ENCODE measurements at regions of chr14 and their contacts with region 1.

Region 1: DNA sequence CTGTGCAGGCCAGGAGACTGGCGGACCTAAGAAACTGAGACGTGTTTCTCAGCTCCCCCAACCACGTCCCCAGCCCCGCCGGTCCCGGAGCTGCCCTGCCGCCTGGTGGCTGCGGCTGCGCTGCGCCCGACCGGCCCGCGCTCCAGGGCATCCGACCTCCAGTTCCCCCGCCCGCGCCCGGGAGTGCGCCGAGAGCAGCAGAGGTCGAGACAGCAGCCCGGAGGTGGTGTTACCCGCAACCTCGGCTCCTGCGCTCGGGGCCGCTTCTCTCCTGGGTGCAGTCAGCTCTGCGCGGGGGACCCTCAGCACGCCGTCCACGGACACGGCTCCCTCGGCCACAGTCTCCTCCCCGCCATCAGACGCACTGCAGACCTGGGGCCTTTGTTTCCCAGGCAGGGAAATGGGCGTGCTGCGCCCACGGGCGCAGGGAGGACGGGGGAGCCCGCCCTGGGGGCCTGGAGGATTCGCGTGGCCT is 21.6 kb upstream of the GPR132 start:
- DNase-seq: peak; percentile 94
- ATAC-seq: peak; percentile 87
- H3K4me3 Mint-ChIP-seq: peak overlapping the region; percentile 64
- H3K27ac Mint-ChIP-seq: no peak overlapping the region
- H3K4me1 Mint-ChIP-seq: peaks cover 8% of the 10 kb centered on the region
- H3K27me3 Mint-ChIP-seq: no peaks in the 10 kb centered on the region

Region 2: DNA sequence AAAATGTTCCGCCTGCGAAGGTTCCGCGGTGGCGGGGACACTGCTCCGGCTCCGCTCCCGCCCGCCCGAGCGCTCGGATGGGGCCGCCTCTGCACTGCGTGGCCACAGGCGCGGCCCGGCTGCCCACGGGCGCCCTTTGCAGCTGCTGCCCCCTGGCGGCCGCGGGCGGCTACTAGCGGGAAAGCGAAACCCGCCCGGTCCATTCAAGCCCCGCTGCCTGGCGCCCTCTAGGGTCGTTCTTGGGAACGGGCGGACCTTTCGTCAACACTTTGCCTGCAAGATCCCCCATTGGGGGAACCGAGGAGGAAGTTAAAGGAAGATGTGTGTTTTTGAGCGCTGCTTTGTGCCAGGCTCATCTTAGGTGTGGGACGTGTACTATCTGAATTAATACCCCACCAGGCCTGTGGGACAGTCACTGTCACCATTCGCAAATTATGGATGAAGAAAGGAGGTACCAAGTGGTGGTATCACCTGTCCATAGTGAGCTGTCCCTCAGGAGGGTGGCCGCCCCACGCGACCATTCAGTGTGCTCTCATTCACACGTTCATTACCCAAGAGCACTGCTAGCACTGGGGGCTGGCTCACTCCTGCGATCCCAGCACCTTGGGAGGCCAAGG is 41.1 kb before region 1 on chr14:
- CTCF ChIA-PET with region 1: interaction called, 6 read pairs
- POLR2A ChIA-PET with region 1: no interaction called
- intact Hi-C with region 1: loop called in 1 of 2 experiments (anchors 1 kb)
- DNase-seq: peak; percentile 96
- ATAC-seq: peak; percentile 89
- H3K4me3 Mint-ChIP-seq: no peak overlapping the region
- H3K27ac Mint-ChIP-seq: peak overlapping the region; percentile 25
- H3K4me1 Mint-ChIP-seq: peaks cover 14% of the 10 kb centered on the region
- H3K27me3 Mint-ChIP-seq: peaks cover 9% of the 10 kb centered on the region

Region 3: DNA sequence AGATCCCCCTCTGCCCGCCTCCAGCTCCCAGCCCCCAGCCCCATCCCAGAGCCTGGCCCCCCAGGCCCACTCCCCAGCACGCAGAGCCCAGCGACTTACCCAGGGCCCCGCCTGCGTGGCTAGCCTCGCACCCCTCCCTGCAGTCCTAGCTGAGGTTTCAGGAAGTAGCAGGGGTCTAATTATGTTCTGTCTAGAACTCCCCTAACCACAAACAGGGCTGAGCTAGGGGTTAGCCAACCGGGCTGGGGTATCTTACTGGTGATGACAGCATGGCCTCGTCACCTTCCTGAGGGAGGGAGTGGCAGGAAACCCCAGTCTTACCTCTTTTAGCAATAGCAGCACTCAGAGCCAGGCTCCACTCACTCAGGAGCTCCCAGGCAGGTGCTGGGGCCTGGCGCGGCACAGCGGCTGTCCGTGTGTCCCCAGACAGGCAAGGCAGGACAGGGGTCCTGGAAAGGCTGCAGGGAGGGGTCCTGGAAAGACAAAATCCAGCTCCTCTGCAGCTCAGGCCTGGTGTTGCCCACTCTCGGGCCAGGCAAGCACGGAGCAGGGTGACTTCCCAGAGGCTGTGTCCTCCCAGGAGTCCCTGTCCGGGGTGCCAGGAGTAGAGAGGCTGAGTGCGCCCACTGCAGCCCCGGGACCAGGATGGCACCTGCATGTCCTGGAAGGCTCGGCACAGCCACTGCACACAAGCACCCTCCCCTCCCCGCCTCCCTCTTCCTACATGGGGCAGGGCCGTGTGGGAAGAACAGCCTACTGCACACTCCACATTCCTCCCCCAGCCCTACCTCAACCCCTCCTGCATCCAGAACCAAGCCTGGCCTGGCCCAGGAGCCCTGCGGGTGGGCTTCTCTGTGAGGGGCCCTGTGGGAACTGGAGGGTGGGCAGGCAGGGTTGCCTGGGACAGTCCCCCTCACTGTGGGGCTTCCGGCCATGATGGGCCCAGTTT is 21.3 kb before region 1 on chr14 and contains the start of gene GPR132:
- CTCF ChIA-PET with region 1: interaction called, 41 read pairs
- POLR2A ChIA-PET with region 1: interaction called, 5 read pairs
- intact Hi-C with region 1: loop called (anchors 1 to 2 kb)
- DNase-seq: peak; percentile 93
- ATAC-seq: peak; percentile 78
- H3K4me3 Mint-ChIP-seq: peak within 1 kb of the TSS; percentile 92
- H3K27ac Mint-ChIP-seq: peak within 1 kb of the TSS; percentile 96
- H3K4me1 Mint-ChIP-seq: peaks cover 74% of the 10 kb centered on the region
- H3K27me3 Mint-ChIP-seq: no peaks in the 10 kb centered on the region
- total RNA-seq, gene GPR132: 27.7 to 35.4 TPM

Region 4: DNA sequence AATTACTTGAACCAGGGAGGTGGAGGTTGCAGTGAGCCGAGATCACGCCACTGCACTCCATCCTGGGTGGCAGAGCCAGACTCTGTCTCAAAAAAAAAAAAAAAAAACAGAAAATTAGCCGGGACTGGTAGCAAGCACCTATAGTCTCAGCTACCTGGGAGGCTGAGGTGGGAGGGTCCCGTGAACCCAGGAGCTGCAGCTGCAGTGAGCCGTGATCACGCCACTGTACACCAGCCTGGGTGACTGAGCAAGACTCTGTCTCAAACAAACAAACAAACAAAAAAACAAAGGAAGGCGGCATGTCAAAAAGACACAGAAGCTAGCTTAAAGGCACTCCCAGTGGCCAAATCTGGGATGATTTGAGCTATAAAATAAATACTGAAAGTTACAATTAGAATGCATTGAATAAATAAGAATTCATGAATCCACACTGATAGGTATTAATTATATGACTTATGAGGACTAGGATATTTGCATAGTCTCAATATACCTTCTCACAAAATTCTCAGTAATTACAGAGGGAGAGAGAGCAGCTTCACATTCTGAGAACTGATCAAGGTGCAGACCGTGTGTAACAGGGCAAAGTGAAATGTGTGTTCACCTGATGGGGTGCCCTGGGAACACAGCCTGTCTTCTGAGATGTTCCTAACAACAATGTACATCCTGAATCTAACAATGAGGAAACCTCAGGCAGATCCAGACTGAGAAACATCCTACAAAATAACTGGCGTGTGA is 21.1 kb after region 1 on chr14:
- CTCF ChIA-PET with region 1: no interaction called
- POLR2A ChIA-PET with region 1: no interaction called
- intact Hi-C with region 1: no loop called
- DNase-seq: no peak
- ATAC-seq: no peak
- H3K4me3 Mint-ChIP-seq: no peak overlapping the region
- H3K27ac Mint-ChIP-seq: no peak overlapping the region
- H3K4me1 Mint-ChIP-seq: no peaks in the 10 kb centered on the region
- H3K27me3 Mint-ChIP-seq: peaks cover 20% of the 10 kb centered on the region

Region 5: GRCh38 chr14:105187935-105188524 is 101.2 kb after region 1 on chr14:
- CTCF ChIA-PET with region 1: interaction called, 6 read pairs
- POLR2A ChIA-PET with region 1: no interaction called
- intact Hi-C with region 1: loop called (anchors 1 to 5 kb)
- DNase-seq: peak; percentile 67
- ATAC-seq: no peak
- H3K4me3 Mint-ChIP-seq: no peak overlapping the region
- H3K27ac Mint-ChIP-seq: no peak overlapping the region
- H3K4me1 Mint-ChIP-seq: peaks cover 4% of the 10 kb centered on the region
- H3K27me3 Mint-ChIP-seq: peaks cover 2% of the 10 kb centered on the region

Region 6: DNA sequence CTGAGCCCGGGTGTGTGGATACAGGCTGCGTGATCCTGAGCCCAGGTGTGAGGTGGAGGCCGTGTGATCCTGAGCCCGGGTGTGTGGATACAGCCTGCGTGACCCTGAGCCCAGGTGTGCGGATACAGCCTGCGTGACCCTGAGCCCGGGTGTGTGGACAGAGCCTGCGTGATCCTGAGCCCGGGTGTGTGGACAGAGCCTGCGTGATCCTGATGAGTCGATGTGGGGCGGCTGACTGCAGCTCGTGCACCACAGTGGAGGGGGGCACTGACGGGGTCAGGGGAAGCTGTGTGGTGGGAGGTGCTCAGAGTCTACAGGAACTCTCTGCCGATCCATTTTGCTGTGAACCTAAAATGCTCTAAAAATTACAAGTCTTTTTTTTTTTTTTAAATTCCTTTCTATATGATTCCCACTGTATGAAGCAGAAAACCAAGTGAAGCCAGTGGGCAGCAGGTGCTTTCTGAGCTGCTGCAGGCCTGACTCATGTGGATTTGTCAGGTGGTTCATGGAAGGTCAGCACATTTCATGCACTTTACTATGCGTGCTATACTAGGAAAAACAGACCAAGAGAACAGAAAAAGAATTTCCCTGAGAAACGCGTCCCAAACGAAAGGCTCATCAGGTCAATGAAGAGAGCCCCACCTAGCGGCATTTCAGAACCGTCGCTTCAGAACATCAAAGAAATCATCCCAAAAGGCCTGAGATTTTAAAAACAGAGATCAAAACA is 194.7 kb after region 1 on chr14:
- CTCF ChIA-PET with region 1: no interaction called
- POLR2A ChIA-PET with region 1: no interaction called
- intact Hi-C with region 1: loop called in 1 of 2 experiments (anchors 1 kb)
- DNase-seq: peak; percentile 38
- ATAC-seq: no peak
- H3K4me3 Mint-ChIP-seq: no peak overlapping the region
- H3K27ac Mint-ChIP-seq: no peak overlapping the region
- H3K4me1 Mint-ChIP-seq: peaks cover 23% of the 10 kb centered on the region
- H3K27me3 Mint-ChIP-seq: no peaks in the 10 kb centered on the region

Region 7: GRCh38 chr14:105300792-105301533 is 214.1 kb after region 1 on chr14 and contains the start of gene BRF1:
- CTCF ChIA-PET with region 1: no interaction called
- POLR2A ChIA-PET with region 1: no interaction called
- intact Hi-C with region 1: loop called in 1 of 2 experiments (anchors 1 kb)
- DNase-seq: peak; percentile 100
- ATAC-seq: peak; percentile 92
- H3K4me3 Mint-ChIP-seq: peak within 1 kb of the TSS; percentile 86
- H3K27ac Mint-ChIP-seq: peak within 1 kb of the TSS; percentile 86
- H3K4me1 Mint-ChIP-seq: peaks cover 39% of the 10 kb centered on the region
- H3K27me3 Mint-ChIP-seq: no peaks in the 10 kb centered on the region
- total RNA-seq, gene BRF1: 20.0 to 28.1 TPM

Region 8: DNA sequence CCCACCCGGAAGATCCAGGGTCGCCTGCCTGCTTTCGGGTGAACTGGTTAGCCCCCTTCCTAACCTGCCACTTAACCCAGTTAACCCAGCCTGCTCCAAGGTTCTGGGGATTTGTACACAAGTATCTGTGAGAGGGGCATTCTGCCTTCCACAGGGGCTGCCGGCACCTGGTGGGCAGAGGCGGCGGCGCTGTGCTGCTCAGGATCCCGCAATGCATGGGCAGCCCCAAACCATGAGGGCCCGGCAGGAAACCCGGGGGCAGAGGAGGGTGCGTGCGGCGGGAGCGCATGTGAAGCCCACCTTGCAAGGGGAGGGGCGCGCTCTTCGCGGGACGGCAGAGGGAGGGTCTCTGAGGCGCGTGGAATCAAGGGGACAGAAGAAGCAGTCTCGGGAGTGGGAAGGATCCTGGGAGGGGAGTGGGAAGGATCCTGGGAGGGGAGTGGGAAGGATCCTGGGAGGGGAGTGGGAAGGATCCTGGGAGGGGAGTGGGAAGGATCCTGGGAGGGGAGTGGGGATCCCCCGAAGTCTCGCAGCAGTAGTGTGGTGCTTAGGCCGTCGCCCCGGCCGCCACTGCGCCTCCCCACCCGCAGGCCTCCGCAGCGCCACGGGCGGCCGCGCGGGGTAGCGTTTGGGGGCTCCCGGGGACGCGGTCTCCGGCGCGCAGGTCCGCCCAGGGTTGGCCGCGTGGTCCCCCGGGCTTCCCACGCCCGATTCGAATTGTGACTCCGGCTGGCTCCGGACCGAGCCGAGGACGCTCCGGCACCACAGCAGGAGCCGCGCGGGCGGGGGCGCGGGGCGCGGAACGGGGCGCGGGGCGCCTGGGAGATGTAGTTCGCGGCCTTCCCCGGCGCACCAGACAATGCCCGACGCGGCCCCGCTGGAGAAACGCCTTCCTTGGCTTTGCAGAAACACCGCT is 327.8 kb after region 1 on chr14:
- CTCF ChIA-PET with region 1: no interaction called
- POLR2A ChIA-PET with region 1: no interaction called
- intact Hi-C with region 1: loop called in 1 of 2 experiments (anchors 5 kb)
- DNase-seq: peak; percentile 81
- ATAC-seq: peak; percentile 85
- H3K4me3 Mint-ChIP-seq: peak overlapping the region; percentile 61
- H3K27ac Mint-ChIP-seq: no peak overlapping the region
- H3K4me1 Mint-ChIP-seq: peaks cover 11% of the 10 kb centered on the region
- H3K27me3 Mint-ChIP-seq: peaks cover 17% of the 10 kb centered on the region

Region 9: DNA sequence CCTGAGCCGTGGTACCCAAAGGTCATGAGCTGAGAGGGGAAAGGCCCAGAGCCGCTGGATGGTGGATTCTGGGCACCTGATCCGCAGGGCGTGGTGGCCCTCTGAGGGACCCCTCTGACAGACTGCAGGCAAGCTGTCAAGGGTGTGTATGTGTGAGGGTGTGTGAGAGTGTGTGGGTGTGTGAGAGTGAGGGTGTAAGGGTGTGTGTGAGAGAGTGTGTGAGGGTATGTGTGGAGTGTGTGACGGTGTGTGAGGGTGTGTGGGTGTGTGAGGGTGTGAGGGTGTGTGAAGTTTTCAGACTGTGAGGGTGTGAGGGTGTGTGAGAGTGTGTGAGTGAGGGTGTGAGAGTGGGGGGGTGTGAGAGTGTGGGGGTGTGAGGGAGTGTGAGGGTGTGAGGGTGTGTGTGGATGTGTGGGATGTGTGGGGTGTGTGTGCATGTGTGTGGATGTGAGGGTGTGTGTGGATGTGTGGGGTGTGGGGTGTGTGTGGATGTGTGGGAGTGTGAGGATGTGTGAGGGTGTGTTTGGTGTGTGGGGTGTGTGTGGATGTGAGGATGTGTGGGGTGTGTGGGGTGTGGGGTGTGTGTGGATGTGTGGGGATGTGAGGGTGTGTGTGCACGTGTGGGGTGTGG is 596.2 kb after region 1 on chr14:
- CTCF ChIA-PET with region 1: no interaction called
- POLR2A ChIA-PET with region 1: no interaction called
- intact Hi-C with region 1: no loop called
- DNase-seq: no peak
- ATAC-seq: no peak
- H3K4me3 Mint-ChIP-seq: no peak overlapping the region
- H3K27ac Mint-ChIP-seq: no peak overlapping the region
- H3K4me1 Mint-ChIP-seq: peaks cover 2% of the 10 kb centered on the region
- H3K27me3 Mint-ChIP-seq: peaks cover 3% of the 10 kb centered on the region